CD4-positive, alpha-beta T cell (primary cell): ENCODE measurements at regions of chr15 and their contacts with region 1.

Region 1: DNA sequence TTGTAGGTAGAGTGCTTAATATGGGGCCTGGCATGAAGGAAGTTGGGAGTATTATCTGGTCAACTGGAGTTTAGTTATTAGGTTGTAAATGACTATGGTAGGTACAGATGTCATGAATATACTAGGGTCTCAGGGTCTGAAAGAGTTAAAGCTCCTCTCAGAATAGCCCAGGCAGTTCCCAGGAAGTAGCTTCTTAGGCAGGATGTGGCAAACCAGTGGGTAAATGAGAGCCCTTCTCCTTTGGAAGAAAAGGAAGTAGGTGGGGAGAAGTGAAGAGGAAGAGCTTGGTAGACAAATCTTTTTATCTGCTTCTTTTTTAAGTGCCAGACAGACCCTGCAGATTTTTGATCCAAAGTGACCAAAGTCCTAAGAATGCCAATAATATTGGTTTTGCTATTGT is 24.5 kb downstream of the MAP2K1 start:
- DNase-seq: peak in 3 of 14 experiments; percentile 20 to 55 (median 25)
- ATAC-seq: peak; percentile 29
- H3K4me3 ChIP-seq: no peak overlapping the region
- H3K4me3 Mint-ChIP-seq: peak overlapping the region; percentile 71
- H3K27ac ChIP-seq: no peak overlapping the region
- H3K27ac Mint-ChIP-seq: peak overlapping the region; percentile 35
- H3K4me1 ChIP-seq: peaks cover 58% of the 10 kb centered on the region
- H3K4me1 Mint-ChIP-seq: peaks cover 88% of the 10 kb centered on the region
- H3K27me3 ChIP-seq: no peaks in the 10 kb centered on the region
- H3K27me3 Mint-ChIP-seq: no peaks in the 10 kb centered on the region
- CTCF ChIP-seq: no peak

Region 2: DNA sequence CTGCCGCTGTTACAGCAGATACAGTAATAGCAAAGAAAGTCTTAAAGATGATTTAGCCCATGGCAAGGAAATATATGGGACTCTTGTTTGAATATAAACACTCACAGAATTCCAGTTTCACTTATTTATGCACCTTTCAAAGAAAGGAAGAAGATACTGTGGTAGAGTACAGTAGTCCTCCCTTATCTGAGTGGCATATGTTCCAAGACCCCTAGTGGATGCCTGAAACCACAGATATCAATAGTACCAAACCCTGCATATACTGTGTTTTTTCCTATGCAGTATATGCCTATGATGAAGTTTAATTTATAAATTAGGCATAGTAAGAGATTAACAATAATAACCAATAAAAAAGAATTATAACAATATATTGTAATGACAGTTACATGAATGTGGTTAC is 16.3 kb before region 1 on chr15:
- CTCF ChIA-PET with region 1: no interaction called
- POLR2A ChIA-PET with region 1: interaction called, 15 read pairs
- intact Hi-C with region 1: loop called in 1 of 2 experiments (anchors 2 kb)
- DNase-seq: no peak
- ATAC-seq: no peak
- H3K4me3 ChIP-seq: no peak overlapping the region
- H3K4me3 Mint-ChIP-seq: peak overlapping the region; percentile 30
- H3K27ac ChIP-seq: peak overlapping the region in 1 of 2 donors; percentile 46
- H3K27ac Mint-ChIP-seq: peak overlapping the region; percentile 74
- H3K4me1 ChIP-seq: peaks cover 79% of the 10 kb centered on the region
- H3K4me1 Mint-ChIP-seq: peaks cover 80% of the 10 kb centered on the region
- H3K27me3 ChIP-seq: no peaks in the 10 kb centered on the region
- H3K27me3 Mint-ChIP-seq: no peaks in the 10 kb centered on the region
- CTCF ChIP-seq: no peak